Calu3 (cell line): ENCODE measurements at regions of chrX and their contacts with region 1.

Region 1: GRCh38 chrX:17689971-17690409 is 47.3 kb upstream of the SCML1 start:
- DNase-seq: peak; percentile 66
- H3K4me3 Mint-ChIP-seq: no peak overlapping the region
- H3K27ac Mint-ChIP-seq: peak overlapping the region; percentile 71
- H3K4me1 Mint-ChIP-seq: peaks cover 19% of the 10 kb centered on the region
- H3K27me3 Mint-ChIP-seq: no peaks in the 10 kb centered on the region
- CTCF ChIP-seq: peak; percentile 54

Region 2: DNA sequence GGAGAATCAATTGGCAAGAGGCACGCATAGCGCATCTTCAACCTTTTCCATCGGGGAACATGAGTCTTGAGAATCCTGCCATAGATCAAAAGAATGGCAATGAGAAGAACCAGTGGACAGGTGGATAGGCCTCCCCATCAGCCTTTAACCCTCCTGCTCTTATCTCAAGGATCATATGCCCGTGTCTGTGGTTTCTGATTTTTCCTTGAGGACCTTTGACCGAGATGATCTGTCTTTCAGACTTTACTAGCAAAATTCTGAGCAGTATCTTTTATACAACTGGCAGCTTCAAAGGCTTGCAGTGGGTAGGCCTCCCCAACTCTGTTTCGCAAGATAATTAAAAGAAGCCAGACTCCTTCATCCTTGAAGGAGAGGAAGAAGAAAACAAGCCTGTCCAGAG is 569.2 kb before region 1 on chrX:
- CTCF ChIA-PET with region 1: no interaction called
- intact Hi-C with region 1: loop called (anchors 5 kb)
- DNase-seq: no peak
- H3K4me3 Mint-ChIP-seq: no peak overlapping the region
- H3K27ac Mint-ChIP-seq: no peak overlapping the region
- H3K4me1 Mint-ChIP-seq: no peaks in the 10 kb centered on the region
- H3K27me3 Mint-ChIP-seq: no peaks in the 10 kb centered on the region
- CTCF ChIP-seq: no peak

Region 3: DNA sequence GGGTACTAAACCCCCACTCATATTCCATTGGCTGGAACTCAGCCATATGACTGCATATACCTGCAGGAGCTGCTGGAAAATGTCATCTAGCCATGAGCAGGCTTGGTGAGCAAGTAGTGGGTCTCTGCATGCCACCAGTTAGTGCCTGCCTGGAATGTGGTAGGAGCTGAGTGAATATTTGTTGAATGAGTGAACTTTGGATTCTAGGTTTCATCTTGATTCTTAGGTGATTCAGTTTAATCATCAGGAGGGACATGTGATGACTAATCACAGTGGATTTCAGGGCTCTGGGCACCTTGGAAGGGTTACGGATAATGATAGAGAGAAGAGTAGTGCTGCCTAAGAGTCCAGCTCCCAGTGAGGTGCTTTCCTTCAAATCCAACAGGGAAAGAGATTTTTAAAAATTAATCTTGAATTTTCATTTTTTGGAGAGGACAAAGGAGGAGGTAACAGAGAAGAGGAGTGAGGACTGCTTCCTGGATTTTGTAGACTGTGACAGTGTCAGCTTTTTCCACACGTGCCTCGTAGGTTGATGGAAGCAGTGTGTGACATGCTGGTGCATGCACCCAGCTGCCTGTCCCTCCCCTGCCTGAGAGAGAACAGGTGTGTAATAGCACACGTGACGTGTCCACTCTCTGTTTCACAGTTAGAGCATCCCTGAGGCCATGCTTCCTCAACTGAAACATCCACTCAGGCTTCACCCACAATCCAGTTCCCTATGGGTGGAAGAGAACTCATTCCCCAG is 284.6 kb before region 1 on chrX:
- CTCF ChIA-PET with region 1: no interaction called
- intact Hi-C with region 1: loop called (anchors 10 kb)
- DNase-seq: peak; percentile 44
- H3K4me3 Mint-ChIP-seq: peak overlapping the region; percentile 15
- H3K27ac Mint-ChIP-seq: peak overlapping the region; percentile 52
- H3K4me1 Mint-ChIP-seq: peaks cover 39% of the 10 kb centered on the region
- H3K27me3 Mint-ChIP-seq: no peaks in the 10 kb centered on the region
- CTCF ChIP-seq: no peak

Region 4: DNA sequence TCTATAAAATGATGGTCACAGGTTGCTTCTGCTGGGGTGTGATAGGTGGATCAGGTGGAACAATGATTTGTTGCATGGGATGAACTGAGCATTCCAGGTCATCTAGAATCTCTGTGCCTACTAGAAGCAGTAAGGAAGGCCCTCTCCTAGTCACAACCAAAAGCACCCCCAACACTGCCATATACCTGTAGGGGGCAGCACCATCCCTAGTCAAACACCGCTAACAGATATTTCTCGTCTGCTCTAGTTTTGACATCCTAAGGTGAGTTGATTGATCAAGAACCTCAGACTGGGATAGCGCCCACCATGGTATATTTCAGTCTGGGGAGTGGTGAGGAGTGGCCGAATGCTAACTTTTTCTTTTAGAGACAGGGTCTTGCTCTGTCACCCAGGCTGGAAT is 154.8 kb before region 1 on chrX:
- CTCF ChIA-PET with region 1: no interaction called
- intact Hi-C with region 1: loop called (anchors 1 kb)
- DNase-seq: peak; percentile 35
- H3K4me3 Mint-ChIP-seq: no peak overlapping the region
- H3K27ac Mint-ChIP-seq: no peak overlapping the region
- H3K4me1 Mint-ChIP-seq: peaks cover 24% of the 10 kb centered on the region
- H3K27me3 Mint-ChIP-seq: no peaks in the 10 kb centered on the region
- CTCF ChIP-seq: no peak

Region 5: GRCh38 chrX:17967888-17968287 is 277.9 kb after region 1 on chrX:
- CTCF ChIA-PET with region 1: no interaction called
- intact Hi-C with region 1: no loop called
- DNase-seq: no peak
- H3K4me3 Mint-ChIP-seq: no peak overlapping the region
- H3K27ac Mint-ChIP-seq: no peak overlapping the region
- H3K4me1 Mint-ChIP-seq: no peaks in the 10 kb centered on the region
- H3K27me3 Mint-ChIP-seq: peaks cover 63% of the 10 kb centered on the region
- CTCF ChIP-seq: no peak